ENCODE measurements at regions of chr2 and their contacts with region 1.

Region 1: GRCh38 chr2:160109936-160110673 is 47.7 kb upstream of the PLA2R1 start:
- DNase-seq: peak; percentile 83
- H3K4me3 Mint-ChIP-seq: no peak overlapping the region
- H3K27ac Mint-ChIP-seq: no peak overlapping the region
- H3K4me1 Mint-ChIP-seq: no peaks in the 10 kb centered on the region
- H3K27me3 Mint-ChIP-seq: peaks cover 2% of the 10 kb centered on the region

Region 2: DNA sequence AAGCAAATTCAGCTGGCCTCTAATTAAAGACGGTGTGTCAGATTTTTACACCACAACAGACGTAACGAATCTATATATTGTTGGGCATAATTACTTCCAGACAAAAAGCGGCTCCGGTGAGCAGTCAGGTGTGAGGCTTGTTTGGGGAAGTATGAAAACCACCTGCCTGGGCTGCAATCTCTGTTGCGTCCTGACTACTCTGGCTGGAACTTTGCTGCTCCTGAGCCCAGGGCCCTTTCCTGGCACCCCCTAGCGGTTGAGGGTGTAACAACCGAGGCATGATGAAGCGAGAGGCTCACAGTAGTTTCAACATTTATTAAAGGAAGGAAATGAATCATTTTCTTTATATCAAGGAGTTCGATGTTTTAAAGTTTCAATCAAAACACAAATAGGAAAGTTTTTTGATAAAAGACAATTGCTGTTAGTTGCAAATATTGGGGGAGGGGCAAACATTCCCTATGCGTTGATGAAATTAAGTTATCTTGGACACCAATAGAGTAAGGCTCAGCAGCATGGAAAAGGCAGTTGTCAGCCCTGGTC is 100.6 kb after region 1 on chr2:
- intact Hi-C with region 1: loop called (anchors 1 kb)
- DNase-seq: peak; percentile 89
- H3K4me3 Mint-ChIP-seq: no peak overlapping the region
- H3K27ac Mint-ChIP-seq: no peak overlapping the region
- H3K4me1 Mint-ChIP-seq: peaks cover 15% of the 10 kb centered on the region
- H3K27me3 Mint-ChIP-seq: peaks cover 21% of the 10 kb centered on the region